ENCODE measurements at regions of chr19 and their contacts with region 1.

Region 1: GRCh38 chr19:11452620-11453310 is 17.3 kb downstream of the PRKCSH start:
- DNase-seq: no peak
- ATAC-seq: no peak
- H3K4me3 ChIP-seq: no peak overlapping the region
- H3K27ac ChIP-seq: no peak overlapping the region
- H3K4me1 ChIP-seq: no peaks in the 10 kb centered on the region; the same call in 1 of the 2 replicates
- H3K27me3 ChIP-seq: no peaks in the 10 kb centered on the region
- CTCF ChIP-seq: 0 out of 2 replicates have a peak, but pooled peaks have one; percentile 11
- POLR2A ChIP-seq: no peak
- RAD21 ChIP-seq: no peak

Region 2: GRCh38 chr19:11374433-11375142 is 78.2 kb before region 1 on chr19 and contains the start of gene SWSAP1:
- CTCF ChIA-PET with region 1: no interaction called
- POLR2A ChIA-PET with region 1: interaction called, 12 read pairs
- dilution Hi-C with region 1: no loop called
- in situ Hi-C with region 1: no loop called
- intact Hi-C with region 1: no loop called
- DNase-seq: peak; percentile 99
- ATAC-seq: peak; percentile 94
- H3K4me3 ChIP-seq: peak within 1 kb of the TSS; percentile 58
- H3K27ac ChIP-seq: peak within 1 kb of the TSS; percentile 90
- H3K4me1 ChIP-seq: peaks cover 22% of the 10 kb centered on the region
- H3K27me3 ChIP-seq: no peaks in the 10 kb centered on the region
- CTCF ChIP-seq: no peak
- POLR2A ChIP-seq: peak; percentile 75
- RAD21 ChIP-seq: no peak
- total RNA-seq, gene SWSAP1: 0.36 and 0.56 TPM in 2 replicates

Region 3: GRCh38 chr19:11577451-11578257 is 124.9 kb after region 1 on chr19 and contains the start of gene ACP5:
- CTCF ChIA-PET with region 1: no interaction called
- POLR2A ChIA-PET with region 1: no interaction called
- dilution Hi-C with region 1: no loop called
- in situ Hi-C with region 1: no loop called
- intact Hi-C with region 1: no loop called
- DNase-seq: no peak
- ATAC-seq: no peak
- H3K4me3 ChIP-seq: no peak within 1 kb of the TSS
- H3K27ac ChIP-seq: no peak within 1 kb of the TSS
- H3K4me1 ChIP-seq: peaks cover 4% of the 10 kb centered on the region
- H3K27me3 ChIP-seq: peaks cover 3% of the 10 kb centered on the region; the same call in 1 of the 2 replicates
- CTCF ChIP-seq: no peak
- POLR2A ChIP-seq: no peak
- RAD21 ChIP-seq: no peak
- total RNA-seq, gene ACP5: 0.28 and 0.54 TPM in 2 replicates

Measured in IMR-90 (cell line).